MCF 10A (cell line): ENCODE measurements at regions of chr2 and their contacts with region 1.

Region 1: GRCh38 chr2:64311948-64312621 is 141.9 kb upstream of the LGALSL start:
- DNase-seq: peak; percentile 96
- H3K4me3 Mint-ChIP-seq: no peak overlapping the region
- H3K27ac Mint-ChIP-seq: peak overlapping the region; percentile 39
- H3K4me1 Mint-ChIP-seq: peaks cover 23% of the 10 kb centered on the region
- H3K27me3 Mint-ChIP-seq: no peaks in the 10 kb centered on the region
- CTCF ChIP-seq: peak; percentile 56

Region 2: GRCh38 chr2:64052468-64053241 is 259.4 kb before region 1 on chr2:
- CTCF ChIA-PET with region 1: interaction called, 66 read pairs
- POLR2A ChIA-PET with region 1: interaction called, 19 read pairs
- intact Hi-C with region 1: loop called (anchors 1 kb)
- DNase-seq: no peak
- H3K4me3 Mint-ChIP-seq: no peak overlapping the region
- H3K27ac Mint-ChIP-seq: no peak overlapping the region
- H3K4me1 Mint-ChIP-seq: peaks cover 23% of the 10 kb centered on the region
- H3K27me3 Mint-ChIP-seq: no peaks in the 10 kb centered on the region
- CTCF ChIP-seq: no peak

Region 3: DNA sequence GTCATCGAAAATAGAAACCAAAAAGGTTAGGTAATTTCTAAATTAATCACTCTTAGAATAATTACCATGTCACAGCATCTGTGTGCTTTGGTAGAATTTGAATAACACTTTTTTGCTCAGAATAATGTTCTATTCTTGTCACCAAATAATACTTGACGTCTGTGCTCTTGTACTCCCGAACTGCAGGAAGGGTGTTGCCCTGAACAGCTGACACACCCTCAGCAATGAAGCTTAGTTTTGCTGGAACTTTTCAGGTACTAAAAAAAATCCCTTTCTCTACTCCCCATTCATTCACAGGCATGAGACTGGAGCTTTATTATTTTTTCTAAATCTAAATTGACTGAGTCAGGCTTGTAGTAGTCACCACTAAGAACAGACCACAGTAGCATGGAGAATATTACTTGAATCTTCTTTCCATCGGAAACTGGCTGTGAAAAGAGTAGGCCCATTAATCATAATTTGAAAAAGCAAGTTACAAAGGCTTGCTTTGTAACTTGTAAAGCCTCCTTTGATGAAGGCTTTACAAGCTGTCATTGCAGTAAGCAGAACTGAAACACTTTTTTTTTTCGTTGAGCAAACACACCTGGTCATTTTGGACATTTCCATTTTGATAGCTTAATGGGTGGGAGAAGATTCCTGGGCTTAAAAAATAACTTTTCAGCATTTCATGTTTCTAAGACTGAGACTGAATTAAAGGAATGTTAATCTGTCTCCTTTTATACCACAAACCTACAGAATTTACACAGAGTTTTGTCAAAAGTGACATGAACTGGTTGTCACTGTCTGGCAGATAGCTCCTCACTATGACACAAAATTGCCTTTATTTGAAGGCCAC is 97.6 kb before region 1 on chr2:
- CTCF ChIA-PET with region 1: interaction called, 8 read pairs
- POLR2A ChIA-PET with region 1: interaction called, 7 read pairs
- intact Hi-C with region 1: loop called (anchors 5 kb)
- DNase-seq: peak; percentile 19
- H3K4me3 Mint-ChIP-seq: no peak overlapping the region
- H3K27ac Mint-ChIP-seq: peak overlapping the region; percentile 28
- H3K4me1 Mint-ChIP-seq: peaks cover 31% of the 10 kb centered on the region
- H3K27me3 Mint-ChIP-seq: no peaks in the 10 kb centered on the region
- CTCF ChIP-seq: no peak

Region 4: DNA sequence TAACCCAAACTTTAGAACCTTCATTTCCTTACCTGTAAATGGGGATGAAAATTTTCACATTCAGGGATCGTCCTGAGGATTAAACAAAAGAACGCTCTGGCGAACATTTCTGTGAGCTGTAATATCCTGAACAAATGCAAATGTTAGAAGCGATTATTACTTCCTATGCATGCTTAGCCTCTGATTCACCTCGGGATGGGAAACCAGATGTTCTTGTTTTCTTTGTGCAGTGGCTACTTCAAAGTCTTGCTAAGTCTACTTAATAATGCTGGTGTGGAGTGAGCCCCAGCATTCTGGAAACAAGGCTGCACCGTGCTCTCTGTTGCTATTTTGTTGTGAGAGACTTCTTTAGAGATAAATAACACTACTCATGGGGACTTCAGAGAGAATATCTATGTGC is 48.8 kb before region 1 on chr2:
- CTCF ChIA-PET with region 1: interaction called, 10 read pairs
- POLR2A ChIA-PET with region 1: interaction called, 8 read pairs
- intact Hi-C with region 1: no loop called
- DNase-seq: peak; percentile 67
- H3K4me3 Mint-ChIP-seq: peak overlapping the region; percentile 23
- H3K27ac Mint-ChIP-seq: peak overlapping the region; percentile 79
- H3K4me1 Mint-ChIP-seq: peaks cover 41% of the 10 kb centered on the region
- H3K27me3 Mint-ChIP-seq: no peaks in the 10 kb centered on the region
- CTCF ChIP-seq: no peak

Region 5: GRCh38 chr2:64273524-64274398 is 38.3 kb before region 1 on chr2:
- CTCF ChIA-PET with region 1: interaction called, 9 read pairs
- POLR2A ChIA-PET with region 1: interaction called, 10 read pairs
- intact Hi-C with region 1: no loop called
- DNase-seq: peak; percentile 97
- H3K4me3 Mint-ChIP-seq: peak overlapping the region; percentile 33
- H3K27ac Mint-ChIP-seq: peak overlapping the region; percentile 40
- H3K4me1 Mint-ChIP-seq: peaks cover 32% of the 10 kb centered on the region
- H3K27me3 Mint-ChIP-seq: no peaks in the 10 kb centered on the region
- CTCF ChIP-seq: no peak